ENCODE measurements at regions of chr4 and their contacts with region 1.

Region 1: GRCh38 chr4:153750197-153750817 is 9.5 kb downstream of the RNF175 start:
- DNase-seq: peak; percentile 70
- ATAC-seq: peak; percentile 96
- H3K4me3 Mint-ChIP-seq: no peak overlapping the region
- H3K27ac Mint-ChIP-seq: no peak overlapping the region
- H3K4me1 Mint-ChIP-seq: peaks cover 6% of the 10 kb centered on the region
- H3K27me3 Mint-ChIP-seq: no peaks in the 10 kb centered on the region
- CTCF ChIP-seq: peak; percentile 69

Region 2: GRCh38 chr4:153344131-153345010 is 405.9 kb before region 1 on chr4 and contains the start of gene MND1:
- CTCF ChIA-PET with region 1: interaction called, 4 read pairs
- POLR2A ChIA-PET with region 1: no interaction called
- intact Hi-C with region 1: loop called (anchors 10 kb)
- DNase-seq: peak; percentile 94
- ATAC-seq: peak; percentile 94
- H3K4me3 Mint-ChIP-seq: peak within 1 kb of the TSS; percentile 93
- H3K27ac Mint-ChIP-seq: peak within 1 kb of the TSS; percentile 87
- H3K4me1 Mint-ChIP-seq: peaks cover 24% of the 10 kb centered on the region
- H3K27me3 Mint-ChIP-seq: peaks cover 12% of the 10 kb centered on the region
- CTCF ChIP-seq: peak; percentile 100
- total RNA-seq, gene MND1: 48.0 to 50.0 TPM

Region 3: DNA sequence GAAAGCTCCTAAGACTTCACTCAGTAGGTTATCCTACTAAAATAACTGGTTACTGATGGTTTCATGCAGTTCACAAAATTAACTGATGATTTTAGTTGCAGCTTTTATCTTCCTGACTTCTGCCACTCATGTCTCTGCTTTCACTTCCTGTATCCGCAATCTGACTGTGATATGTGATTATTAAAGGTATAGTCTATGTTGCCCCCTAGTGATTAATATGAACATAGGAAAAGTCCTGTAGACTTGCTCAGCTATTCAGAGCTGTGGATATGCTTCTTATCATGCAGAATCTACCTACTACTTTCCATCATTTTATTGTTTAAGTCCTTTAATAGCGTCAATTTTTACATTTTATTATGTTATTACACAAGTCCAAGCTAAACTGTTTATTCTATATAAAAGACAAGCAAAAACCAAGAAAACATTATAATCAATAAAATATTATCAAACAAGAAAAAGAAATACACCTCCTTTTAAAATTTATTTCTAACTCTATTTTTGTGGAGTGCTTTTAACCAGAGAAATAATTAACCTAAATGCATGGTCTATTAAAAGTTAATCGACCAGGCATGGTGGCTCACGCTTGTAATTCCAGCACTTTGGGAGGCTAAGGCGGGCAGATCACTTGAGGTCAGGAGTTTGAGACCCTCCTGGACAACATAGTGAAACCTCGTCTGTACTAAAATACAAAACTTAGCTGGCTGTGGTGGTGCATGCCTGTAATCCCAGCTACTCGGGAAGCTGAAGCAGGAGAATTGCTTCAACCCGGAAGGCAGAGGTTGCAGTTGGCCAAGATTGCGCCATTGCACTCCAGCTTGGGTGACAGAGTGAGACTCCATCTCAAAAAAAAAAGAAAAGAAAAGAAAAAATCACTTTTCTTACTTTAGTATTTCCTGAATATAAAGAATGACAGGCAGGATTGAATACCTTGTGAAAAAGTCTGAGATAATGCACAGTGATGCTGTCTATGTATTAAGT is 106.6 kb before region 1 on chr4:
- CTCF ChIA-PET with region 1: interaction called, 48 read pairs
- POLR2A ChIA-PET with region 1: no interaction called
- intact Hi-C with region 1: loop called (anchors 5 kb)
- DNase-seq: no peak
- ATAC-seq: peak; percentile 94
- H3K4me3 Mint-ChIP-seq: no peak overlapping the region
- H3K27ac Mint-ChIP-seq: peak overlapping the region; percentile 13
- H3K4me1 Mint-ChIP-seq: peaks cover 9% of the 10 kb centered on the region
- H3K27me3 Mint-ChIP-seq: no peaks in the 10 kb centered on the region
- CTCF ChIP-seq: peak; percentile 73

Region 4: DNA sequence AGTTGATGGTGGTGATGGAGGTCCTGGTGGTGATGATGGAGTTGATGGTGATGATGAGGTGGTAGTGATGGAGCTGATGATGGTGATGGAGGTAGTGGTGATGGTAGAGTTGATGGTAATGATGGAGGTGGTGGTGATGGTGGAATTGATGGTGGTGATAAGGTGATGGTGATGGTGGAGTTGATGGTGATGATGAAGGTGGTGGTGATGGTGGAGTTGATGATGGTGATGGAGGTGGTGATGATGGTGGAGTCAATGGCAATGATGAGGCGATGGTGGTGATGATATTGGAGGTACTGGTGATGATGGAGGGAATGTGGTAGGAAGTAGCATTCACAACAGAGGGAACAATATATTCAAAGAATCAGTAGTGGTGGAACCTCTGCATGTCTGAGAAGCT is 87.2 kb before region 1 on chr4:
- CTCF ChIA-PET with region 1: interaction called, 10 read pairs
- POLR2A ChIA-PET with region 1: no interaction called
- intact Hi-C with region 1: no loop called
- DNase-seq: no peak
- ATAC-seq: no peak
- H3K4me3 Mint-ChIP-seq: no peak overlapping the region
- H3K27ac Mint-ChIP-seq: no peak overlapping the region
- H3K4me1 Mint-ChIP-seq: no peaks in the 10 kb centered on the region
- H3K27me3 Mint-ChIP-seq: peaks cover 2% of the 10 kb centered on the region
- CTCF ChIP-seq: no peak

Region 5: DNA sequence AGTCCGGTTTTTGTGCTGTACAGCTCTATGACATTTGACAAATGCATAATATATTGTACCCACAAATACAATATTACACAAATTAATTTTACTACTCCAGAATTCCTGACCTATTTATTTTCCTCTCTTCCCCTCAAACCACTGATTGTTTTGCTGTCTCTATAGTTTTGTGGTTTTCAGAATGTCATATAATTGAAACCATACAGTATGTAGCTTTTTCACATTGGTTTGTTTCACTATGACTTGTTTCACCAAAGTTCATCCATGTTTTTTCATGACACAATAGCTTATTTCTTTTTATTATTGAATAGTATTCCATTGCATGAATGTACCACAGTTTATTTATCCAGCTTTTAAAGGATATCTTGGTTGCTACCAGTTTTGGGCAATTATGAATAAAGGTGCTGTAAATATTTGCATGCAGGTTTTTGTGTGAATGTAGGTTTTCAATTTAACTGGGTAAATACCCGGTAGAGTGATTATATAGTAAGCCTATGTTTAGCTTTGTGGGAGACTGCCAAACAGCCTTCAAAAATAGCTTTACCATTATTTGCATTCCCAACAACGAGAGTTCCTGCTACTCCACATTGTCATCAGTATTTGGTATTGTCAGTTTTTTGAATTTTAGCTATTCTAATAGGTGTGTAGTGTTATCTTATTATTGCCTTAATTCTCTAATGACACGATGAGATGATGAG is 16.4 kb before region 1 on chr4:
- CTCF ChIA-PET with region 1: interaction called, 24 read pairs
- POLR2A ChIA-PET with region 1: interaction called, 3 read pairs
- intact Hi-C with region 1: no loop called
- DNase-seq: no peak
- ATAC-seq: no peak
- H3K4me3 Mint-ChIP-seq: no peak overlapping the region
- H3K27ac Mint-ChIP-seq: no peak overlapping the region
- H3K4me1 Mint-ChIP-seq: peaks cover 10% of the 10 kb centered on the region
- H3K27me3 Mint-ChIP-seq: peaks cover 7% of the 10 kb centered on the region
- CTCF ChIP-seq: no peak

Region 6: DNA sequence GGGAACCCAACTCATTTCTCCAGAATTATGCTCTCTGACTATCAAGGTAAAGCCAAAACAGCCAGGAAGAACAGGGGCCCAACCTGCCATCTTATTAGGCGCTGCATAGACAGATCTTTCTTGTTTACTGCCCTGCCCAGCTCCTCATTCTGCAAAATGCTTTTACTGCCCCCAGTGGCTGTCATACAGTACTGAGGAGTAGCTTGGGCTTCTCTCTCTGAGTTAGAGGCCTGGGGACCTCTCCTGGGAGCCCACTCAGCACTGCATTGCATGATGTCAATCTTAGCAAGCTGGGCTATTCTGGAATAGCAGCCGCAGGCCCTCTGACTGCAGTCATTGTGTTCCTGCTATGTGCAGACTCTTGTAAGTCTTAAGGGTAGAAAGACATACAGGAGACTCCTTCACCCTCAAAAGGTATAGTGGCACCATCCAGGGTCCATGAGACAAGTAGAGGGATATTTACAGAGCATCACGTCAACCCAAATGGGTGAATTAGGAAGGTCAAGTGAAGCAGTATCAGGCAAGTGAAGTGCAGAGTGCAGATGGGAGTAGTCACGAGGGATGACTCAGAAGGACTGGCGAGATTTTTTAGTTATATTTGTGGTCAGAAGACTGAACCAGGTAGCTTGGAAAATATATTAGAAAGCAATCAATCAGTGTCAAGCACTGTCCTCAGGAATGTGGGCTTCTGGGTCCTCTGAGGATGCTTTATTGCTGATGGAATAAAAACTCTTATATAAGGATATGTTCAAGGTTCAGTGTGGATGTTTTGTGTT is 332.6 kb after region 1 on chr4:
- CTCF ChIA-PET with region 1: no interaction called
- POLR2A ChIA-PET with region 1: no interaction called
- intact Hi-C with region 1: no loop called
- DNase-seq: peak; percentile 8
- ATAC-seq: no peak
- H3K4me3 Mint-ChIP-seq: no peak overlapping the region
- H3K27ac Mint-ChIP-seq: no peak overlapping the region
- H3K4me1 Mint-ChIP-seq: no peaks in the 10 kb centered on the region
- H3K27me3 Mint-ChIP-seq: peaks cover 9% of the 10 kb centered on the region
- CTCF ChIP-seq: no peak

Measured in activated CD8-positive, alpha-beta T cell treated with anti-CD3 and anti-CD28 coated beads for 36 hours (primary cell).